ENCODE measurements at regions of chr13 and their contacts with region 1.

Region 1: DNA sequence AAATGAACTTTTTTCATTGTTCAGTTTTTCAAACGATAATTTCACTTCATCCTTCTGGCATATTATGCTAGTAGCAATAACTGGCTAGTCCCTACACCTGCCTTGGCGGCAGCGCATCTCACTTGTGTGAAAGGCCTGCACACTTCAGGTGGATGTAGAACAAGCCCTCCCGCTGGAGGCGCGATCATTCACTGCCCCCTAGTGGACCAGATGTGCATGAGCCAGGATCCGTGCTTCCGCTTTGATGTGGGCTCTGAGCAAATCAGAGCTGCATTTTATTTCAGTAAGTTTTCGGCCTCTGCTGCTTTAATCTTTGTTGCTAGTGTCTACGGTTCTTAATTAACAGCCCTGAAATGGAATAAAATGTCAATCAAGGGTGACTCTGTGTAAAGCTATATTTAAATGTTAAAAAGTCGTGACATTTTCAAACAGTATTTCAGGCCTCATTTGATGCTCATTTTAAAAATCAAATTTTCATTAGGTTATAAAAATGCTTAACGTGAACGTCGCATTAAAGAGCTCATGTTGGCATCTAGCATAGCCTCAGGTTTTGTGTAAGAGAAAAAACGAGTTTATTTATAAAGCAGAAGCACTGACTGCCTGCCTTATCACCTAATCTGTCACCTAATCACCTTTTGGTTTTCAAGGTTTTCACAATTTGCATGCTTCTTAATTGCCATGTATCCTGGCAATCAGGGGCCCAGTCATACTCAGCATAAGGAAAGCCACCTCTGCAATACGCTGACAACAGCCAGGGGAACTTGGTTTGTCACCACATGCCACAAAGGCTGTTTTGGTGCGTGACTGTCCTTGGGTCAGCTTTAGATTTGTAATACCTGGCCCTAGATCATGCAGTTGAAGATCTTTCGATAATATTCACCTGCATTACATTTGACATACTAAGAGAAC is 112.2 kb downstream of the TEX26 start:
- H3K4me3 Mint-ChIP-seq: no peak overlapping the region
- H3K27ac Mint-ChIP-seq: no peak overlapping the region
- H3K4me1 Mint-ChIP-seq: peaks cover 51% of the 10 kb centered on the region
- H3K27me3 Mint-ChIP-seq: peaks cover 19% of the 10 kb centered on the region

Region 2: GRCh38 chr13:30132623-30133553 is 911.7 kb before region 1 on chr13:
- intact Hi-C with region 1: loop called (anchors 10 kb)
- H3K4me3 Mint-ChIP-seq: no peak overlapping the region
- H3K27ac Mint-ChIP-seq: no peak overlapping the region
- H3K4me1 Mint-ChIP-seq: peaks cover 6% of the 10 kb centered on the region
- H3K27me3 Mint-ChIP-seq: no peaks in the 10 kb centered on the region

Region 3: GRCh38 chr13:30679483-30680330 is 364.9 kb before region 1 on chr13:
- intact Hi-C with region 1: loop called (anchors 5 kb)
- H3K4me3 Mint-ChIP-seq: no peak overlapping the region
- H3K27ac Mint-ChIP-seq: no peak overlapping the region
- H3K4me1 Mint-ChIP-seq: peaks cover 24% of the 10 kb centered on the region
- H3K27me3 Mint-ChIP-seq: peaks cover 8% of the 10 kb centered on the region

Region 4: DNA sequence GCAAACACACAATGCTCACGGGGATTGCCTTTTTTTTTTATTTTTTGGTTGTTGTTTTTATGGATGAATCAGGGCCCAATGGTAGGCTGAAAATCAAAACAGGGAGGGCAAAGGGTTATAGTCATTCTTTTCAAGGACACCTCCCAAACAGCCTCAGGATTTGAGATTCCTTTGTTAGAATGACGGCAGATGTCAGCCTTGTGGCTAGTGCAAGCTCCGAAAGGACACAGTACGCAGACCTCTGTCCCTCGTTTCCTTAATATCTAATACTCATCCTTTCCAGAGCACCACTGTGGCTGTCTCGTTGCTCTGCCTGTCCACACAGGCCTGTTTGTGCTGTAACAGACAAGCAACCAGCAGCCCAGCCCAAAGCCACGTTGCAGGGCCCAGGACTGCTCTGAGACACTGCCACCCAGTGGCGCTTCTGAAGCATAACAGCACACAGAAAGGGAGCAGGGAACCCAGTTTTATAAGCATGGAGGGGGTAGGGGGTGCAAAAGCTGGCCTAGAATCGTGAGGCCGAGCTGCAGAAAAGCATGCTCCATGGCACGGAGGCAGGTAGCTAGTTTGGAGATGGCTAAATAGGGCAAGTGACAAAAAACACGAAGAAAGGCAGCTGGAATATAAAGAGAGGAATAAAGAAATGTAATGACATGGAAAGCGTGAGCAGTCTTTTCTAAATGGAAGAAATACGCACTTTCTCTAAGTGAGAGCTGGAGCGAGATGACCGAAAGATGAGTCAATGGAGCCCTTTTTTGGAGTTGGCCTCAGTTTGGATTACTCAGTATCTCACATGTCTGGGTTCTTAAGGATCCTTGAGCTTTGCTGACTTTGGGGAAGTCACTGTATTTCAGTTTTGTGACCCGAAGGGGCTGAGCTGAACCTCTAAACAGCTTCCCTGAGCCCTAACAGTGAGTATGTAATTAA is 179.2 kb before region 1 on chr13:
- intact Hi-C with region 1: loop called (anchors 5 kb)
- H3K4me3 Mint-ChIP-seq: peak overlapping the region; percentile 51
- H3K27ac Mint-ChIP-seq: peak overlapping the region; percentile 8
- H3K4me1 Mint-ChIP-seq: peaks cover 20% of the 10 kb centered on the region
- H3K27me3 Mint-ChIP-seq: peaks cover 15% of the 10 kb centered on the region

Region 5: GRCh38 chr13:30978981-30979956 is 65.4 kb before region 1 on chr13:
- intact Hi-C with region 1: loop called (anchors 2 kb)
- H3K4me3 Mint-ChIP-seq: no peak overlapping the region
- H3K27ac Mint-ChIP-seq: no peak overlapping the region
- H3K4me1 Mint-ChIP-seq: peaks cover 5% of the 10 kb centered on the region
- H3K27me3 Mint-ChIP-seq: peaks cover 40% of the 10 kb centered on the region

Region 6: DNA sequence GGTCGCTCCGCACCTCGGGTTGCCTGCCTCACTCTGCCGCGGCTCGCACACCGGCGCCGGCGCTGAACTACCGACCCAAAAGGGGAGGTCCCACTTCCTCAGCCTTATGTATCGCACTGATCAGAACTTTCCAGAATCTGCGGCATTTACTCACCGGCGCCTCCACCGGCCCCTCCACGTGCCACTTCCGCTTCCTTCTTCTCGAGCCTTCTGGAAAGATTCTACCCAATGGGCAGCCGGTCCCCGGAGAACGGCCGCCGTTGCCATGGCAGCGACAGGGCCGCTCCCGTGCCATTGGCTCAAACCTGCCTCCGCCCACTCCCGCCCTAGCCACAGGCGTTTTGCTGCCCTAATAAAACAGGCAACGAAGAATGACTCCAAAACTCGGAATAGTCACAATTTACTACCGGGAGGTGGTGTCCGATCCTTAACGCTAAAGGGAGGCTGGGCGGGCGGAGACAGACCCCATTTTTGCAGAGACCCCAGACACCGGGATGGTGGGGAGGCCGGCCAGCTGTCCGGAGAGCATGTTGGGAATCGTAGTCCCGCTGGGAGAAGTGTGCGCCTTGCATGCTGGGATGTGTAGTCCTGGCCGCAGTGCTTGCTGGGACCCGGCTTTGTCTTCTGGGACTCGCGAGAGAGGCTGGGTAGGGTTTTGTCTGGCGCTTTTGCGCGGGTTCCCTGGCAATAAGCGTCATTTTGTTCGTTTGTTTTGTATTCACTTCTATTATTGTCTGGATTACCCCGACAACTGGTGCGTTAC is 117.4 kb after region 1 on chr13 and contains the start of gene HSPH1:
- intact Hi-C with region 1: loop called (anchors 5 kb)
- H3K4me3 Mint-ChIP-seq: peak within 1 kb of the TSS; percentile 99
- H3K27ac Mint-ChIP-seq: peak within 1 kb of the TSS; percentile 96
- H3K4me1 Mint-ChIP-seq: peaks cover 30% of the 10 kb centered on the region
- H3K27me3 Mint-ChIP-seq: no peaks in the 10 kb centered on the region

Region 7: DNA sequence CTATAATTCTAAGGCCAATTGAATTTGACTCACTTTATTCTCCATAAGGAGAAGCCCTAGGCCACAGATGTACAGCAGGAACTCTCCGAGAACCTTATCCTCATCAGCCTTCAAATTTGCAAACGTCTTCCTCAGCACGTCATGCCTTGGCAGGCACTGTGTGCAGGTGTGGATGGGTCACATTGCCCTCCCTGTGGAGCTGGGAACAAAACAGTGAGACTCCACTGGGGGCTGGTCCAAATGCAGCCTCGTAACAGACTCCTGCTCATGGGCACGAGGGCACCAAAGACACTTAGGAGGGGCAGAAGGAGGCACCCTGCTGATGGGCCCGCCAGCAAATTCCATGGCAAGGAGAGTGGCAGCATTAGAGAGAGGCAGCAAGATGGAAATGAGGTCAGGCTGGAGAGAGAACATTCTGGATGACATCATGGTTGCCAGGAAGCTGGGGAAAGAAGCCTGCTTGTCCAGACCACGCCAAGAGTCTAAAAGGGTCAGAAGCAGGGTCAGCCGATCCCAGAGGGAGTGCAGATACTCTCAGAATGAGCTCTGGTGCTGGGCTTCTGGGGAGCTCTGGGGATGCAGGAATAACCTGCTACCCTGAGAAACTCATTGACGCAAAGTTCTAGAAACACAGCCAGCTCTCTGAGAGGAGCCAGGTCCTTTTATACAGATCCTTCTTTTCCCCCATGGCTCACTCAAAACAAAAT is 397.3 kb after region 1 on chr13:
- intact Hi-C with region 1: no loop called
- H3K4me3 Mint-ChIP-seq: no peak overlapping the region
- H3K27ac Mint-ChIP-seq: no peak overlapping the region
- H3K4me1 Mint-ChIP-seq: no peaks in the 10 kb centered on the region
- H3K27me3 Mint-ChIP-seq: peaks cover 5% of the 10 kb centered on the region

Measured in dendritic cell treated with granulocyte-macrophage colony-stimulating factor and Interleukin-4, amounts not matched to agents 40 ng/mL and 50 ng/mL, for 4 days (primary cell).